ENCODE measurements at regions of chr18 and their contacts with region 1.

Region 1: GRCh38 chr18:7559709-7560319 is 7.3 kb upstream of the PTPRM start:
- DNase-seq: no peak
- ATAC-seq: peak in 1 of 2 donors; percentile 21

Region 2: GRCh38 chr18:7291046-7291445 is 268.8 kb before region 1 on chr18:
- intact Hi-C with region 1: no loop called
- DNase-seq: no peak
- ATAC-seq: no peak

Region 3: DNA sequence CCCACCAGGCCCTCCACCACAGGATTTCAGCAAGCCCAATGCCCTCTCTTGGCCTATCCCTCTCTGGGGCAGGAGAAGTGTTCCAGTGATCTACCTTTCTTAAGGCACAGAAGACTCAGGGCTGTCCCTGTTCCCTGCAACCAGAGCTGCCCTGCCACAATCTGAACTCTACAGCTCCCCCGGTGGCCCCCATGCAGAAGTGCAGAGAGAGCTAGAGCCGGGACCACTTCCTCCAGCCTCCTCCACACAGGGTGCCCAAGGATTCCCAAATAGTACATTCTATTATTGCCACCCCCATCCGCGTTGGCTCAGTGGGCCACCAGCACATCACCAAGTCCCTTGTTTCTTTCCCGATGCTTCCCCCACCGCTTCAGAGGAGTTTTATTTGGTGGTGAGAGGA is 107.5 kb before region 1 on chr18:
- intact Hi-C with region 1: loop called in 1 of 2 experiments (anchors 5 kb)
- DNase-seq: peak; percentile 23
- ATAC-seq: peak in 1 of 2 donors; percentile 75

Measured in left cardiac atrium (tissue), 4 donors.